MCF 10A (cell line): ENCODE measurements at regions of chr12 and their contacts with region 1.

Region 1: DNA sequence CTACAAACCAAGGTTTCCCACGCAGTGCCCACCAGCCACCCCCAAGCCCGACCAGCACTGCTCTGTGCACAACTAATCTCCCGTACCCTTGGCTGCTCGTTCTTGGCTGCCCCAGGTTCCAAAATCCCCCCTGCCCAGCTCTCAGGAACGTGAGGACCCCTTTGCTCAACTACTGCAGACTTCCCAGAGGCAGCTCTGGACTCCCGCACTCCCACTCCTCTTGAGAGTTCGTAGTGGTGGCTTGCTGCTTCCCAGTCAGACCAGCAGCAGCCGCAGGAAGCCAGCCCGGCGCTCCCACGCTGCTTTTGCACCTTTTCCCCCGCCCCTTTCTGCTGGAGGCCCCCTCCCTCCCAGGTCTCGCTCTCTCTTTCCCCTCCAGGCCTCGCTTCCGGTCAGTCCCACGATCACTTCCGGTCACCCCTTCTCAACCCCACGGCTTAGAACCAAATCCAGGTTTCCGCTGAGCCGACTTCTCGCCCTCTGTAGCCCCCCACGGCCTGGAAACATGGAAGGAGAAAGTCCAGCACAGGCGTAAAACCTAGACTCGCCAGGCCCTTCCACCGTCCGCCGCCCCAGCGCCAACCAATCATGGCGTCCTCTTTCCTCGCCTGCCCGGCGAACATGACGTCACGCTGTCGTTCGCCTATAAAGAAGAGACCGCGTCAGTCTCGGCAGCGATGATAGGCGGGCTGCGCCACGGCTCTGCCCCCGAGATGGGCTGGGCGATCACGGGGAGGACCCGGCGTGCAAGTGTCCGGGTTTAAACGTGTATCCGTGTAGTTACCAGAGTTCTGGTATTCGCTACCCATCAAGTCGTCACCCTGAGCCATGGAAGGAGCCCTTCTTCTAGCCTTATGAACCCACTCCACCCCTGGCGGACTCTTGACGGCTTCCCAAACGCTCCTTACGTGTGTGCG is at the start of gene TFCP2:
- DNase-seq: peak; percentile 95
- H3K4me3 Mint-ChIP-seq: no peak within 1 kb of the TSS
- H3K27ac Mint-ChIP-seq: no peak within 1 kb of the TSS
- H3K4me1 Mint-ChIP-seq: no peaks in the 10 kb centered on the region
- H3K27me3 Mint-ChIP-seq: no peaks in the 10 kb centered on the region
- CTCF ChIP-seq: no peak
- total RNA-seq, gene TFCP2: 31.5 and 34.9 TPM in 2 replicates

Region 2: GRCh38 chr12:50882563-50882962 is 290.2 kb before region 1 on chr12:
- CTCF ChIA-PET with region 1: no interaction called
- POLR2A ChIA-PET with region 1: no interaction called
- intact Hi-C with region 1: no loop called
- DNase-seq: no peak
- H3K4me3 Mint-ChIP-seq: no peak overlapping the region
- H3K27ac Mint-ChIP-seq: no peak overlapping the region
- H3K4me1 Mint-ChIP-seq: no peaks in the 10 kb centered on the region
- H3K27me3 Mint-ChIP-seq: no peaks in the 10 kb centered on the region
- CTCF ChIP-seq: no peak

Region 3: DNA sequence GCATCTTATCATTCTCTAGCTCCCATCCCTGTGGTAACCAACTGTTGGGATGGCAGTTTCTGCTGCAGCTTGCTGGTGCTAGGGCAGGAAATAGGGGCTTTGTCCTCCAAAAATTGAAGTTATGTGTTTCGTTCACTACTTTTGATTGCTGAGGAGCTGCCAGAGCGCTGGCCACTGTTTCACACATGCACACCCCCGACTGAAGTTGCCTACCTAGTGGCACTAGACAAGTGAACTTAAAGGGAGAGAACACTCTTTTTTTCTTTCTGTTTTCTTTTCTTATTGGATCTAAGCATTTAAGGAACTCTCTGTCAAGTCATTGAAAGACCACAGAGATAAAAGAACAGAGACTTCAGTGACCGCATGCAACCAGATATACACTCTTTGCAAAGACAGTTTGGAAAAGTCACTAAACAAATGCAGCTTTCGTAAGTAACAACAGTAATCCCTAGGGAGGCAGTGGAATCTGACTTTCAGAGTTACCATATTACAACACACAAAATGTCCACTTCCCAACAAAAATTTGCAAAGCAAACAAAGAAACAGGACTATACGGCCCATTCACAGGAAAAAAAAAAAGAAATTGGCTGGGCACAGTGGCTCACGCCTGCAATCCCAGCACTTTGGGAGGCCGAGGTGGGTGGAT is 11.8 kb before region 1 on chr12:
- CTCF ChIA-PET with region 1: no interaction called
- POLR2A ChIA-PET with region 1: no interaction called
- intact Hi-C with region 1: no loop called
- DNase-seq: no peak
- H3K4me3 Mint-ChIP-seq: no peak overlapping the region
- H3K27ac Mint-ChIP-seq: no peak overlapping the region
- H3K4me1 Mint-ChIP-seq: no peaks in the 10 kb centered on the region
- H3K27me3 Mint-ChIP-seq: no peaks in the 10 kb centered on the region
- CTCF ChIP-seq: no peak

Region 4: DNA sequence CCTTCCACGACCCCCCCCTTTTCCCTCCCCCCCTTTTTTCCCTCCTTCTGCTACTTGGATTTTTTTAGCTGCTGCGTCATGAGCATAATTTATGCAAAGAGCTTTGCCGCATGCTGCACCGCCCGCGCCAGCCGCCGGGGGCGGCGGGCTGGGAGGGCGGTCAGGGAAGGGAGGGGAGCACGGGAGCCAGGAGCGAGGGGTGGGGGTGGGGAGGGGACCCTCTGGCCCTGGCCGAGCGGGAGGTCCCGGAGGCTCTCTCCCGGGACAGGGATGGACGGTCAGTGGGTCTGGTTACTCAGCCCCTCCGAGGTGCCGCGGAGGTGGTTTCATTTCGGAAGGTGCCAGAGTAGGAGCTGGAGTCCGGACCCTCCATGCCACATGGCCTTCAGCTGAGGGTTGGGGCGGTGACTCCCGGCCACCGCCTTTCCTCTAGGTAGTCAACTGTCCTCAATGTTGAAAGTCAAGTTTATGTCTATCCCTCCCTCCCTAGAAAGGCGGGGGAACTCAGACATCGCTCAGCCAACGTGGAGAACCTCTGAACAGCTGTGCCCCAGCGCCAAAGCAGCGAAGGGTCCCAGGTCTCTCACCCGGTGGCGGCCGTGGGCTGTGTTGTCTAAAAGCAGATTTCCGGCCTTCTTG is 45.3 kb after region 1 on chr12 and contains the start of gene POU6F1:
- CTCF ChIA-PET with region 1: no interaction called
- POLR2A ChIA-PET with region 1: interaction called, 10 read pairs
- intact Hi-C with region 1: loop called (anchors 2 kb)
- DNase-seq: peak; percentile 72
- H3K4me3 Mint-ChIP-seq: peak within 1 kb of the TSS; percentile 74
- H3K27ac Mint-ChIP-seq: peak within 1 kb of the TSS; percentile 85
- H3K4me1 Mint-ChIP-seq: peaks cover 6% of the 10 kb centered on the region
- H3K27me3 Mint-ChIP-seq: no peaks in the 10 kb centered on the region
- CTCF ChIP-seq: peak; percentile 65
- total RNA-seq, gene POU6F1: 3.0 and 3.8 TPM in 2 replicates